CD4-positive, alpha-beta T cell (primary cell): ENCODE measurements at regions of chr1 and their contacts with region 1.

Region 1: GRCh38 chr1:27392096-27392777 is at the start of gene GPR3:
- DNase-seq: peak; percentile 88 to 97 (median 92)
- ATAC-seq: peak; percentile 89
- H3K4me3 ChIP-seq: peak within 1 kb of the TSS; percentile 45
- H3K4me3 Mint-ChIP-seq: peak within 1 kb of the TSS; percentile 77
- H3K27ac ChIP-seq: no peak within 1 kb of the TSS
- H3K27ac Mint-ChIP-seq: peak within 1 kb of the TSS; percentile 57
- H3K4me1 ChIP-seq: peaks cover 36% of the 10 kb centered on the region
- H3K4me1 Mint-ChIP-seq: peaks cover 26% of the 10 kb centered on the region
- H3K27me3 ChIP-seq: no peaks in the 10 kb centered on the region
- H3K27me3 Mint-ChIP-seq: peaks cover 3% of the 10 kb centered on the region
- CTCF ChIP-seq: peak; percentile 71
- total RNA-seq, gene GPR3: 0.14 to 0.19 TPM

Region 2: GRCh38 chr1:27203946-27204345 is 188.3 kb before region 1 on chr1:
- CTCF ChIA-PET with region 1: no interaction called
- POLR2A ChIA-PET with region 1: no interaction called
- intact Hi-C with region 1: loop called in 1 of 2 experiments (anchors 2 kb)
- DNase-seq: no peak
- ATAC-seq: no peak
- H3K4me3 ChIP-seq: no peak overlapping the region
- H3K4me3 Mint-ChIP-seq: no peak overlapping the region
- H3K27ac ChIP-seq: no peak overlapping the region
- H3K27ac Mint-ChIP-seq: no peak overlapping the region
- H3K4me1 ChIP-seq: no peaks in the 10 kb centered on the region
- H3K4me1 Mint-ChIP-seq: no peaks in the 10 kb centered on the region
- H3K27me3 ChIP-seq: no peaks in the 10 kb centered on the region
- H3K27me3 Mint-ChIP-seq: no peaks in the 10 kb centered on the region
- CTCF ChIP-seq: no peak

Region 3: DNA sequence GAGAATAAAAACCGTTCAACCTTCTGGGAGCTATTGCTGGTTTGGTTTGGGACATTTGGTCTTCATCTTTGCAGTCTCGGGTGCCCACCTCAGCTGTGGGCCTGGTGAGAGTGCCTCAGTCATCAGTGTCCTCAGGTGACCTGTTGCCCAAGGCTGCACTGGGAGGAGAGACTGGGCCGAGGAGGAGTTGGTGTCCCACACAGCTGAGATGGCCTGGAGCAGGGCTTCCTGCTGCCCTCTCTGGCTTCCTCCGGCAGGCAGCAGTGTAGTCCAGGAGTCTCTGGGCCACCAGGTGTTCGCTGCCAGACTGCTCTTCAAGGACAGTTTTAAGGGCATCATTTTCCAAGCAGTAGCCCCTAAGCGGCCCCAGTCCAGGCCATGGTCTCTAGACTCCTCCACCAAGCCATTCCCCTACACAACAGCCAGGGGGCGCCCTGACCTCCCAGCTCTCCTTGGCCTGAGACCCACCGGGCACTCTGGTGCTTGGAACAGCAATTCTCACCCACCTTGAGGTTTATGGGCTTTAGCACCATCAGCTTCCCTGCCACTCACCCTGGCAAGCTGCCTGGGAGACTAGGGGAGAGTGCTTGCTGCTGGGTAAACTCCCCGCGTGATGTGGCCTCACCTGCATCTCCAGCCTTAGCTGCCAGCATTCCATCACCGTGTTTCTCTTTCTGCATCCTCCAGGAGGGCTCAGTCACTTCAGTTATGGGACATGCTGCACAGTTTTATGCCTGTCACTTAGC is 59.5 kb before region 1 on chr1:
- CTCF ChIA-PET with region 1: interaction called, 23 read pairs
- POLR2A ChIA-PET with region 1: no interaction called
- intact Hi-C with region 1: loop called (anchors 1 to 2 kb)
- DNase-seq: peak; percentile 37 to 81 (median 53)
- ATAC-seq: peak; percentile 87
- H3K4me3 ChIP-seq: no peak overlapping the region
- H3K4me3 Mint-ChIP-seq: peak overlapping the region; percentile 56
- H3K27ac ChIP-seq: no peak overlapping the region
- H3K27ac Mint-ChIP-seq: no peak overlapping the region
- H3K4me1 ChIP-seq: peaks cover 32% of the 10 kb centered on the region
- H3K4me1 Mint-ChIP-seq: peaks cover 29% of the 10 kb centered on the region
- H3K27me3 ChIP-seq: no peaks in the 10 kb centered on the region
- H3K27me3 Mint-ChIP-seq: no peaks in the 10 kb centered on the region
- CTCF ChIP-seq: peak; percentile 82

Region 4: DNA sequence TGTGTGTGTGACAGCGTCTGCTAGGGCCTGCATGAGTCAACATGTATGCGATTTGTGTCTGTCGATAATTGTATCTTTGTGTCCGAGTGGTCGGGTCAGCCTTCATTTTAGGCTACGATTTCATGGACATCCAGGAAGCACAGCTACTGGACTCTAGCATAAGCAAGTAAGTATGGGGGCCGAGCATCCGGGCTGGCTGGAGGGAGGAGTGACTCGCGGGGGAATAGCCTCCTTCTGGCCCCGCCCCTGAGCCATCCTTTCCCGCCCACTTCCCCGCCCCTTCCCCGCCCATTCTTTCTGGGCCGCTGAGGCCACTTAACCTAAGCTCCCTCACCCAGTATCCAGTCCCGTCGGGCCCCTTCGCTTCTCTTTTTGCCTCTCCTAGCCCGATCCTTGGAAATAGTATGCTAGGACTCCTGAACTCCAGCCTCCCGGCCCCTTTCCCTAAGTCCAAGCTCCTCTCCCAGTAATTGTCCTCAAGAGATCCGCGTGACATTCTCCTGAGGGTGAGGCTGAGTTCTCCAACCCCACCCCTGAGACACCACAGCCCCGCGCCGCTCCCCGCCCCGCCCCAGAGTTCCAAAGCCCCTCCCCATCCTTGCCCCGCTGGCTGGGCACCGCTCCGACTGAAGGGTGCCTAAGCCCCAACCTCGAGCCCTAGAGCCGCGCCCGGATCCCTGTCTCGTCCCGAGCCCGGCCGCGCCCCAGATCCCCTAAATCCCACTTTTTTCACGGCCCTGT is 26.7 kb before region 1 on chr1:
- CTCF ChIA-PET with region 1: interaction called, 8 read pairs
- POLR2A ChIA-PET with region 1: interaction called, 5 read pairs
- intact Hi-C with region 1: loop called in 1 of 2 experiments (anchors 2 kb)
- DNase-seq: peak; percentile 62 to 89 (median 78)
- ATAC-seq: peak; percentile 72
- H3K4me3 ChIP-seq: peak overlapping the region; percentile 70
- H3K4me3 Mint-ChIP-seq: peak overlapping the region; percentile 88
- H3K27ac ChIP-seq: no peak overlapping the region
- H3K27ac Mint-ChIP-seq: peak overlapping the region; percentile 43
- H3K4me1 ChIP-seq: peaks cover 49% of the 10 kb centered on the region
- H3K4me1 Mint-ChIP-seq: peaks cover 49% of the 10 kb centered on the region
- H3K27me3 ChIP-seq: no peaks in the 10 kb centered on the region
- H3K27me3 Mint-ChIP-seq: no peaks in the 10 kb centered on the region
- CTCF ChIP-seq: no peak

Region 5: DNA sequence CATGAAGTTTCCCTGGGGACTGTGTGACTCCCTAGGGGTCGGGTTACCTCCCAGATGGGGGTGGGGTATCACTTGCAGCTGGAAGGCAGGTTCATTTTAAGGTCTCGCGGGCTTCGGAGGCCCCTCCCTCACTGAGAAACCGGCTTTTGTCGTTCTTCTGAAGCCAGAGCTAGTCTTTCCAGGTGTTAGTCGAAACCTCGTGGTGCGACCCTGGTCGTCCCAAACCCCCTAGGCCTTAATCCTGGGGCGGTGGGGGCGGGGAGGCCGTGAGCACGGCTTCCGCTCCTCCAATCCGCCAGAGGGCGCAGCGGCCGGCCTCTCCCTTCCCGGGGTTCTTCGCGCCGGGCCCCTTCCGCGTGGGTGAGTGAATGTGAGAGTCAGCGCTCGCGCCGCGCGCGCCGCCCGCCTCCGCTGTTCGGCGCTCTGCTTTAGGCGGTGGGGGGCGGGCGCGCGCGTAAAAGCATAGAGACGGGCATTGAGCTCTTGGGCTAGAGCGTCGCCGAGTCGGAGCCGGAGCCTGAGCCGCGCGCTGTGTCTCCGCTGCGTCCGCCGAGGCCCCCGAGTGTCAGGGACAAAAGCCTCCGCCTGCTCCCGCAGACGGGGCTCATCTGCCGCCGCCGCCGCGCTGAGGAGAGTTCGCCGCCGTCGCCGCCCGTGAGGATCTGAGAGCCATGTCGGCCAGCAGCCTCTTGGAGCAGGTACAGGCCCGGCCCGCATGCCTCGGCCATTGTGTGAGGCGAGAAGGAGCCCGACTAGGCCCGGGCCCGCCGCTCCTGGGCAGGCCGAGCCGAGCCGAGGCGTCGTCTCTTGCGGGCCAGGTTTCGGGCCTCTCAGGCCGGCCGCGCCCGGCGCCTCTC is 1344.4 kb after region 1 on chr1 and contains the start of gene YTHDF2:
- CTCF ChIA-PET with region 1: no interaction called
- POLR2A ChIA-PET with region 1: no interaction called
- intact Hi-C with region 1: no loop called
- DNase-seq: peak; percentile 97 to 99 (median 98)
- ATAC-seq: peak; percentile 91
- H3K4me3 ChIP-seq: peak within 1 kb of the TSS; percentile 95
- H3K4me3 Mint-ChIP-seq: peak within 1 kb of the TSS; percentile 98
- H3K27ac ChIP-seq: peak within 1 kb of the TSS; percentile 82 to 89
- H3K27ac Mint-ChIP-seq: peak within 1 kb of the TSS; percentile 92
- H3K4me1 ChIP-seq: peaks cover 32% of the 10 kb centered on the region
- H3K4me1 Mint-ChIP-seq: peaks cover 44% of the 10 kb centered on the region
- H3K27me3 ChIP-seq: no peaks in the 10 kb centered on the region
- H3K27me3 Mint-ChIP-seq: no peaks in the 10 kb centered on the region
- CTCF ChIP-seq: peak; percentile 94
- total RNA-seq, gene YTHDF2: 85.0 to 100 TPM